H1 (cell line): ENCODE measurements at regions of chr18 and their contacts with region 1.

Region 1: DNA sequence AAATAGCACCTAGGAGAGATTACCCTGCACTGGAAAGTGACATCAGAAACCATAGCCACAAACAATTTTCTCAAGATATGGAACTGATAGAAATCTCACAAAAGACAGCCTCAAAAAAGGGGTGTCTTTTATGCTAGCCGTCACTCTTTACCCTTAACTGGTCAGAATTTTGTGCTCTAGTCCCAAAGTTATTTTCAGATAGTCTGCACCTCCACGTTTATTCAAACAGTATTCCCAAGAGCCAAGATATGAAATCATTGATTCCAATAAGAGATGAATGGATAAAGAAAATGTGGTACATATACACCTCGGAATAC is 23.5 kb upstream of the PMAIP1 start:
- DNase-seq: no peak
- H3K4me3 ChIP-seq: no peak overlapping the region
- H3K27ac ChIP-seq: no peak overlapping the region
- H3K4me1 ChIP-seq: peaks cover 0 to 7% (median 4%) of the 10 kb centered on the region in 4 experiments; a peak in 5 of 7 replicates
- H3K27me3 ChIP-seq: no peaks in the 10 kb centered on the region
- CTCF ChIP-seq: no peak
- EP300 ChIP-seq: no peak
- POLR2A ChIP-seq: no peak
- RAD21 ChIP-seq: no peak

Region 2: DNA sequence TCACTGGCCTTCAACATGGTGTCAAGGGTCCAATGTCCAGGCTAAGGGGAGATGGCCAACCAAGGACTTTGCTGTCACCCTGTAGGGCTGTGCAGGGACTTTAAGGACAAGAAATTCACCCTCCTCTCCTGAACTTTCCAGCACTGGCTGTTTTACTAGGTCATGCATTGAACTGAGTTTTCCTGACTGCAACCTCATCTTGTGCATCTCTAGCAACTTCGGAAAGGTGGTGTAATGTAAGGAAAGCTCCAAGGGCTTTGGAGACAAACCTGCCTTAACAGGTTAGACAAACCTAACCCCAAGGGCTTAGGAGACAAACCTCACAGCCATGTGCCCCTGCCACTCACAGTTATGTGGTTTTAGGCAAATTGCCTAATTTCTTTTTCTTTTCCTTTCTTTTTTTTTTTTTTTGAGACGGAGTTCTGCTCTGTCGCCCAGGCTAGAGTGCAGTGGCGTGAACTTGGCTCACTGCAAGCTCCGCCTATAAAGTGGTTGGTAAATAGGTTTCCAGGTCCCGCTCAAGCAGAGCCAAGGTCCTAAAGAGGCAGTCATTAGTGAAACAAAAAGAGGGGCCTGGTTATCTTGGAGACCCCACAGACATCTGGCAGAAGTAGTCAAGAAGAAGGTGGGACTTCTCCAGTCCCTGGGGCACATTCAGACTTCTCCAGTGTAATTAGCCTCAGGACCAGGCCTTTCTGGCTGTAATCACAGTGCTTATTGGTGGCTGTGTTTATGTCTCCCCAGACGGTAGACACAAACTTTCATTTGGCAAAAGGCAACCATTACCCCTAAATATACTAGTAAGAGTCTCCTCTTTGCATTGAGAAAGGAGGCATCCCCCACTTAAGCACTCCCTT is 14.1 kb before region 1 on chr18:
- CTCF ChIA-PET with region 1: interaction called, 4 read pairs
- POLR2A ChIA-PET with region 1: interaction called, 13 read pairs
- DNase-seq: no peak
- H3K4me3 ChIP-seq: no peak overlapping the region
- H3K27ac ChIP-seq: no peak overlapping the region
- H3K4me1 ChIP-seq: peaks cover 0 to 30% (median 15%) of the 10 kb centered on the region in 4 experiments; a peak in 6 of 7 replicates
- H3K27me3 ChIP-seq: no peaks in the 10 kb centered on the region
- CTCF ChIP-seq: no peak
- EP300 ChIP-seq: no peak
- POLR2A ChIP-seq: no peak
- RAD21 ChIP-seq: no peak

Region 3: DNA sequence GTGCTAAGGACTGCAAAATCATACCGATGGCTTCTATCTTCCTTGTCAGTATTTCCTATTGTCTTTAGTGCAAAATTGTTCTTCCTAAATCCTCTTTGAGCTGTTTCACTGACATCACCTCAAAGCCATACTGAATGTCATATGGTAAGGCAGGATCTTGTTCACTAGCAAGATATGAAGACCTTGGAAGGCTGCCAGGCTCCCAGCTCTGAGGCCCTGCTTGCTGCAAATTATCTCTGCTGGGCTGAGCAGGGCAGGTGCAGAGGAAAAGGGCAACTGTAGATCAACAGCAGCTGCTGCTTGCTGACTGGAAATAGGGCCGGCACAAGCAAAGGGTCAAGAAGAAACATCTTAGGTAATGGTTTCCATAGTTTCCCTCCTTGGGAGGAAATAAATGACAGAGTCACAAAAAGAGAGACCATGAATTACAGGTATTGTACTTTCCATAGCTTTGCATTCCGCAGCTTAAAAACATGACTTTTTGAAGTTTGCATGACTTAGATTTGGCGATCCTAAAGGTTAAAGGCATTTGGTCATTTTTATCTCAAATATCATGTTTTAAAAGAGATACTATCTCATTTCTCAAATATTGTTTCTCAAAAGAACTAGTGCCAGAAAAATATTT is 81.8 kb after region 1 on chr18:
- CTCF ChIA-PET with region 1: no interaction called
- POLR2A ChIA-PET with region 1: no interaction called
- DNase-seq: no peak
- H3K4me3 ChIP-seq: no peak overlapping the region
- H3K27ac ChIP-seq: no peak overlapping the region
- H3K4me1 ChIP-seq: no peaks in the 10 kb centered on the region
- H3K27me3 ChIP-seq: no peaks in the 10 kb centered on the region
- CTCF ChIP-seq: no peak
- EP300 ChIP-seq: no peak
- POLR2A ChIP-seq: no peak
- RAD21 ChIP-seq: no peak